Right ventricle myocardium inferior (tissue), 1 donor: ENCODE measurements at regions of chr17 and their contacts with region 1.

Region 1: DNA sequence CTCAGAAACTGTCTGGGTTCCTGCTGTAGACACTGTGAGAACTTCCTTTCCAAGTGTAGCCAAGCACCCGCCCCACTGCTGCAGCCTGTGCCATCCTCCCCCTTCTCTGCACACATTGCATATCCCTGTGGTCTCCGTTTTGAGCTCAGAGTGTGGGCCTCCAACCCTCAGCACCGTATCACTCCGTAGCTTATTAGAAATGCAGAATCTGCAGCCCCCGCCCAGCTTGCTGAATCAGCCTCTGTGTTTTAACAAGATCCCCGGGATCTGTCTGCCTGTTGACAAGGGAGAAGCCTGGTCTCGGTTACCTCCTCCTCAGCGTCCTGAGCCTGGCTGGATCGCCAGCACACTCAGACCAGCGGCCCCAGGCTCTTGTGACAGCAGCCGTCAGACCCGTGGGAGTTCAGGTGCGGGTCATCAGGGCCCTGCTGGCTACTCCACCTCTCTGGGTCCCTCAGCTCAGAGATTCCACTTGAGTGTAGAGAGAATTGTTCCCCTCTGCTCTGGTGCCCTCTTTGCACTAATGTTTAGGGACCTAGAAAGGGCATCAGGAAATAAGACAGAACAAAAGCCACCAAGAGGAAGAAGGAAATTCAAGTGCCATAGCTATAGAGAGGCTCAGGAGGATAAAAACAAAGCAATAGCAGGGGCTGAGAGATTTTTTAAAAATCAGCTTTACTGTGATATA is 92.3 kb downstream of the PITPNC1 start:
- DNase-seq: peak; percentile 76
- ATAC-seq: peak; percentile 62

Region 2: DNA sequence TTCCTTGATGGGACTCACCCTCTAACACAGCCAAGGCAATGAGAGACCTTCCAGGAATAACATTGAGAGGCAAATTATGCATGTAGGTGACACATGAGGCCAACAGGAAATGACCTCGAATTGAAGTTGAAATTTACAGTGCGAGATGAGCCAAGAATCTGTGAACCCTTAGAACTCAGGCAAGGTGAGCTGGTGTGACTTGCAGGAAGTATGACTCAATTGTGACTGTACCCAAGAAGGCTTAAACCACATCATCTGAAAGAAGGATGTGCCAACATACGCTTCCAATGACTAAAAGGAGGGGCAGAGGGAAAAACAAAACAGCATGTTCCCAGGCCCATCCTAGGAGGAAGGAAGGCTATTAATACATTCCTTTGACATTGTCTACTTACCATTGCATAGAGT is 47.5 kb before region 1 on chr17:
- intact Hi-C with region 1: loop called (anchors 1 kb)
- DNase-seq: no peak
- ATAC-seq: peak; percentile 42

Region 3: DNA sequence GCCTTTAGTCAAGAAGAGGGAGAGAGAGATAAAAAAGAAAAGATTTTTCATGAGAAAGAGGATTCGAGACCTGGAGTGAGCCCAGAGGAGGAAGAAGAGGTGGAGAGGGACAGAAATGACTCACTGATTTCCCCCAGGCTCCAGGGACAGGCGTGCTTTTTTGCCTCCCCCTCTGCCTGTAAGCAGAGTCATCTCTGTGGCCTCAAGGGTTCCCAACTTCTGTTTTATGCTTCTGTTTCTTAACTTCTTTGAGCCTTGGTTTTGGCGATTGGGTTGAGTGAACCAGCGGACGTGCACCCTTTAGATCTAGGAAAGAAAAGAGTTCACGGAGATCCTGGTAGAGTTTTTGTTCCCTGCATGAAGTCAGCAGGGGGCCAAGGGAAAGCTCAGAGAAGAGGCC is 100.5 kb after region 1 on chr17:
- intact Hi-C with region 1: no loop called
- DNase-seq: no peak
- ATAC-seq: no peak